Activated CD4-positive, alpha-beta T cell treated with anti-CD3 and anti-CD28 coated beads for 36 hours (primary cell): ENCODE measurements at regions of chr11 and their contacts with region 1.

Region 1: GRCh38 chr11:13668102-13668956 is at the start of gene FAR1:
- DNase-seq: peak; percentile 98
- ATAC-seq: peak; percentile 92
- H3K4me3 Mint-ChIP-seq: peak within 1 kb of the TSS; percentile 95
- H3K27ac Mint-ChIP-seq: peak within 1 kb of the TSS; percentile 96
- H3K4me1 Mint-ChIP-seq: peaks cover 48% of the 10 kb centered on the region
- H3K27me3 Mint-ChIP-seq: peaks cover 9% of the 10 kb centered on the region
- total RNA-seq, gene FAR1: 34.8 to 36.4 TPM

Region 2: GRCh38 chr11:13276832-13277767 is 391.2 kb before region 1 on chr11:
- CTCF ChIA-PET with region 1: no interaction called
- POLR2A ChIA-PET with region 1: no interaction called
- intact Hi-C with region 1: loop called (anchors 1 to 5 kb)
- DNase-seq: peak; percentile 98
- ATAC-seq: peak; percentile 93
- H3K4me3 Mint-ChIP-seq: peak overlapping the region; percentile 87
- H3K27ac Mint-ChIP-seq: peak overlapping the region; percentile 84
- H3K4me1 Mint-ChIP-seq: peaks cover 43% of the 10 kb centered on the region
- H3K27me3 Mint-ChIP-seq: peaks cover 6% of the 10 kb centered on the region

Region 3: DNA sequence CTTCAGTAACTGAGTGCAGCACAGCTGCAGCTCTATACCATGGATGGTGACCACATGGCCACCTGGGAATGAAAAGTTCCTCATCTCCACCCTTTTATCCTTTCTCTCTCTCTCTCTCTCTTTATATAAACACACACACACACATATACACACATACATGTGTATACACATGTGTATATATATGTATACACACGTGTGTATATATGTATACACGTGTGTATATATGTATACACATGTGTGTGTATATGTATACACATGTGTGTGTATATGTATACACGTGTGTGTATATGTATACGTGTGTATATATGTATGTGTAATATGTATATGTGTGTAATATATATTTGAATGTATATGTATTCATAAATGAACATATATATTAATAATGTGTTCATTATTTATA is 18.7 kb before region 1 on chr11:
- CTCF ChIA-PET with region 1: no interaction called
- POLR2A ChIA-PET with region 1: no interaction called
- intact Hi-C with region 1: no loop called
- DNase-seq: no peak
- ATAC-seq: no peak
- H3K4me3 Mint-ChIP-seq: no peak overlapping the region
- H3K27ac Mint-ChIP-seq: no peak overlapping the region
- H3K4me1 Mint-ChIP-seq: no peaks in the 10 kb centered on the region
- H3K27me3 Mint-ChIP-seq: peaks cover 16% of the 10 kb centered on the region

Region 4: GRCh38 chr11:13868710-13869397 is 200.5 kb after region 1 on chr11:
- CTCF ChIA-PET with region 1: no interaction called
- POLR2A ChIA-PET with region 1: no interaction called
- intact Hi-C with region 1: loop called in 1 of 2 experiments (anchors 5 kb)
- DNase-seq: peak; percentile 30
- ATAC-seq: peak; percentile 96
- H3K4me3 Mint-ChIP-seq: peak overlapping the region; percentile 10
- H3K27ac Mint-ChIP-seq: peak overlapping the region; percentile 91
- H3K4me1 Mint-ChIP-seq: peaks cover 35% of the 10 kb centered on the region
- H3K27me3 Mint-ChIP-seq: no peaks in the 10 kb centered on the region

Region 5: DNA sequence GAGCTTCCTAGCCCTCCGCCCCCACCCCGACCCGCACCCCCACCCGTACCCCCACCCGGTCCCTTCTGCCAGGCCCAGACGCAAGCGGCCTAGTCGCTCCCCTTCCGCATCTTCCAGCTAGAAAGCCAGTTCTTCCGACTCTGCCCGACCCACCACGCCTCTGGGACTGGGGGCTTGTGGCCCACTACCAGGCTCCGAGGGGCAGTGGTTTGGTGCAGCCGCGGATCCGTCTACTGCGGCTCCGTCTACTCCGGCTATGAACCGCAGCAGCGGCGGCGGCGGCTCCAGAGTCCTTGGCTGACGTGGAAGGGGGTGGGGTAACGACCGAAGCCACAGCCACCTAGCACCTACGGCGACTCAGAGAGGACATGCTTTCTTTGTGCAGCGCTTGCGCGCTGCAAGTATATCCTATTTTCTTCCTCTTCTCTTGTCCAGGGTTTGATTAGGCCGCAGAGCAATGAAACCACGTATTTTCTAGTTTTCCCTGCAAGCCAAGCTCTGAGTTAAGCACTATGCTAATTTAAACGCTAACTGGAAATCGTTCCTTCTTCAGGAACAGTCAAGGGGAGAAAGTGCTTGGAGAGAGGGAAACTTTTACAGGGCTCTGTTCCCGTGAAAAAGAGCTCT is 831.3 kb after region 1 on chr11 and contains the start of gene COPB1:
- CTCF ChIA-PET with region 1: no interaction called
- POLR2A ChIA-PET with region 1: no interaction called
- intact Hi-C with region 1: loop called in 1 of 2 experiments (anchors 2 kb)
- DNase-seq: peak; percentile 96
- ATAC-seq: peak; percentile 92
- H3K4me3 Mint-ChIP-seq: peak within 1 kb of the TSS; percentile 87
- H3K27ac Mint-ChIP-seq: peak within 1 kb of the TSS; percentile 95
- H3K4me1 Mint-ChIP-seq: peaks cover 35% of the 10 kb centered on the region
- H3K27me3 Mint-ChIP-seq: no peaks in the 10 kb centered on the region
- total RNA-seq, gene COPB1: 102 to 106 TPM